Activated B cell treated with CpG ODN at 0.5 μM for 24 hours (primary cell): ENCODE measurements at regions of chr12 and their contacts with region 1.

Region 1: GRCh38 chr12:40312982-40313576 is 88.3 kb downstream of the LRRK2 start:
- DNase-seq: no peak
- ATAC-seq: no peak
- H3K4me3 Mint-ChIP-seq: no peak overlapping the region
- H3K27ac Mint-ChIP-seq: peak overlapping the region; percentile 69
- H3K4me1 Mint-ChIP-seq: peaks cover 35% of the 10 kb centered on the region
- H3K27me3 Mint-ChIP-seq: no peaks in the 10 kb centered on the region
- CTCF ChIP-seq: peak; percentile 60

Region 2: DNA sequence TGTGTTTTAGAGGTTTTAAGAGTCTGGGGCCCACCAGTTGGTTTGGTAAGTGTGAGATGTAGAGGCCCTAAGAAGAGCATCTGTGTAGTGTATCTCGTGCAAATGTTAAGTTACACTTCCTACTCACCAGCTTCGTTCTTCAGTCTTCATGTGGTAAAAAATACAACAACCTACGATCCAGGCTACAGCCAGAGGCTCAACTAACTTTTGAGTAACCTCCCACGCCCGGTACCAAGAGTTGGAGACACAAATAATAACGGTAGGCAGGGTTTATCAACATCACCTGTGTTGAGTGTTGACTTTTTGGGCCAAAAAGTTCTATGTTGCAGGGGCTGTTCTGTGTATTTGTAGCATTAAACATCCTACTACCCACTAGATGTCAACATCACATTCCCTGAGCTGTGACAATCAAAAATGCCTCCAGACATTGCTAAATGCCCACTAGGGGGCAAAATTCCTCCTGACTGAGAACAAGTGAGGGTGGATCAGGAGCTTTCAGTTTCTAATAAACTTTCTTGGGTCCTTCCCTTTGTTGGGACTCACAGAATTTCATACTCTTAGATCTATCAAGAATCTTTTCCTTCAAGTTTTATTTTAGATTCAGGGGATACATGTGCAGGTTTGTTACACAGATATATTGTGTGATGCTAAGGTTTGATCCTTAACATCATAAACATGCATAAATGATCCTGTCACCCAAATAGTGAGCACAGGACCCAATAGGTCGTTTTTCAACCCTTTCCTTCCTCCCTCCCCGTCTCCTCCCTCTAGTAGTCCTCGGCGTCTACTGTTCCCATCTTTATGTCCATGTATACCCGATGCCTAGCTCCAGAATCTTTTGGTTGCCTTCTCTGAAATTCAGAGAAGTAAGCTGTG is 301.9 kb before region 1 on chr12:
- CTCF ChIA-PET with region 1: interaction called, 32 read pairs
- POLR2A ChIA-PET with region 1: interaction called, 7 read pairs
- intact Hi-C with region 1: loop called (anchors 1 kb)
- DNase-seq: no peak
- ATAC-seq: peak; percentile 84
- H3K4me3 Mint-ChIP-seq: peak overlapping the region; percentile 68
- H3K27ac Mint-ChIP-seq: peak overlapping the region; percentile 20
- H3K4me1 Mint-ChIP-seq: peaks cover 17% of the 10 kb centered on the region
- H3K27me3 Mint-ChIP-seq: no peaks in the 10 kb centered on the region
- CTCF ChIP-seq: peak; percentile 28

Region 3: GRCh38 chr12:40086471-40086870 is 226.6 kb before region 1 on chr12:
- CTCF ChIA-PET with region 1: no interaction called
- POLR2A ChIA-PET with region 1: no interaction called
- intact Hi-C with region 1: no loop called
- DNase-seq: no peak
- ATAC-seq: no peak
- H3K4me3 Mint-ChIP-seq: no peak overlapping the region
- H3K27ac Mint-ChIP-seq: no peak overlapping the region
- H3K4me1 Mint-ChIP-seq: no peaks in the 10 kb centered on the region
- H3K27me3 Mint-ChIP-seq: no peaks in the 10 kb centered on the region
- CTCF ChIP-seq: no peak

Region 4: GRCh38 chr12:40158592-40159111 is 154.4 kb before region 1 on chr12:
- CTCF ChIA-PET with region 1: interaction called, 54 read pairs
- POLR2A ChIA-PET with region 1: interaction called, 6 read pairs
- intact Hi-C with region 1: loop called (anchors 1 kb)
- DNase-seq: no peak
- ATAC-seq: peak; percentile 76
- H3K4me3 Mint-ChIP-seq: peak overlapping the region; percentile 69
- H3K27ac Mint-ChIP-seq: peak overlapping the region; percentile 87
- H3K4me1 Mint-ChIP-seq: peaks cover 56% of the 10 kb centered on the region
- H3K27me3 Mint-ChIP-seq: no peaks in the 10 kb centered on the region
- CTCF ChIP-seq: no peak

Region 5: DNA sequence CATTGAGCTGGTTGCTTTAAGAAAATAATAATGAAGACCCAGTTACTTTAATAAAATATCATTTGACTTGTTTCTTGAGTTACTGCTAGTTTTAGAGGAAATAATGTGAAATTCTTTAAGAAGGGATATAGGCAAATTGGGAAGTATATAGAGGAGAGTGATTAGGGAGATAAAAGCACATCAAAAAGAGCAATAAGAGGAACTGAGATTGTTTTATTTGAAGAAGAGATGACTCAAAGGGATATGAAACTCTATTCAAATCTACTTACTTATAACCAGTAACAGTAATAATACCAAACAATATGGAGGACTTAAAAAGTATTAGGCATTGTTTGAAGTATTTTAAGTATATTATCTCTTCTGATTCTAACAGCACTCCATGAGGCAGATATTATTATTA is 51.1 kb before region 1 on chr12:
- CTCF ChIA-PET with region 1: interaction called, 3 read pairs
- POLR2A ChIA-PET with region 1: interaction called, 4 read pairs
- intact Hi-C with region 1: loop called (anchors 1 kb)
- DNase-seq: no peak
- ATAC-seq: peak; percentile 73
- H3K4me3 Mint-ChIP-seq: peak overlapping the region; percentile 75
- H3K27ac Mint-ChIP-seq: peak overlapping the region; percentile 92
- H3K4me1 Mint-ChIP-seq: peaks cover 41% of the 10 kb centered on the region
- H3K27me3 Mint-ChIP-seq: no peaks in the 10 kb centered on the region
- CTCF ChIP-seq: no peak

Region 6: GRCh38 chr12:40342010-40342409 is 28.9 kb after region 1 on chr12:
- CTCF ChIA-PET with region 1: no interaction called
- POLR2A ChIA-PET with region 1: no interaction called
- intact Hi-C with region 1: no loop called
- DNase-seq: no peak
- ATAC-seq: no peak
- H3K4me3 Mint-ChIP-seq: no peak overlapping the region
- H3K27ac Mint-ChIP-seq: no peak overlapping the region
- H3K4me1 Mint-ChIP-seq: no peaks in the 10 kb centered on the region
- H3K27me3 Mint-ChIP-seq: no peaks in the 10 kb centered on the region
- CTCF ChIP-seq: no peak